Mucosa of descending colon (tissue), 3 donors: ENCODE measurements at regions of chr17 and their contacts with region 1.

Region 1: DNA sequence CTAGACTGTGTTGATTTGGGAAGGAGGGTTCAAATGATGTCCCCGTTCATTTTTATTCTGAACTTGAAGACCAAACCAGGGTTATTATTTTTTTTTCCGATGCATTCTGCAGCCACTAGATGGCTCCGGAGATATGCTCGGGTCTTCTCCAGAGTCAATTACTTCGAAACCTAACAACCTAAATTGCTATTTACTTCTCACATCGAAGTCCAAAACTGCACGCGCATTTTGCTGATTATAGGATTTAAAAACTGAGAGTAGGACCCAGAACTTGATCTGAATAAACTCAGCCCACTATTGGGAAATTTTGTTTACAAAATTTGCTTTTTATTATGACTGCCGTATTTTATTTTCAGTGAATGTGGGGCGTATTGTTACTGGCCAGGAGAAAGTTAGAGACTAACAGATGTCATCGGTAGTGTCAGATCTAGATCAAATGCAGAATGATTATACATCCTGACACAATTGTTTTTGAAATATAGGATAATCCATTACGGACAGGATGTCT is 263.8 kb downstream of the HS3ST3A1 start:
- DNase-seq: peak in 1 of 3 donors; percentile 59
- ATAC-seq: peak; percentile 42
- H3K4me3 ChIP-seq: no peak overlapping the region
- H3K4me1 ChIP-seq: no peaks in the 10 kb centered on the region
- CTCF ChIP-seq: peak; percentile 69

Region 2: GRCh38 chr17:14300575-14301278 is 962.8 kb after region 1 on chr17 and contains the start of gene HS3ST3B1:
- intact Hi-C with region 1: loop called in 1 of 2 experiments (anchors 10 kb)
- DNase-seq: peak; percentile 98 to 99 (median 98)
- ATAC-seq: peak; percentile 88
- H3K4me3 ChIP-seq: peak within 1 kb of the TSS; percentile 30
- H3K4me1 ChIP-seq: peaks cover 52% of the 10 kb centered on the region
- CTCF ChIP-seq: no peak
- total RNA-seq, gene HS3ST3B1: 1.4 to 1.6 (median 1.5) TPM